ENCODE measurements at regions of chr1 and their contacts with region 1.

Region 1: GRCh38 chr1:109548321-109549267 is at the start of gene GNAI3:
- DNase-seq: peak; percentile 98
- ATAC-seq: peak; percentile 95
- H3K4me3 Mint-ChIP-seq: peak within 1 kb of the TSS; percentile 98
- H3K27ac Mint-ChIP-seq: peak within 1 kb of the TSS; percentile 96
- H3K4me1 Mint-ChIP-seq: peaks cover 40% of the 10 kb centered on the region
- H3K27me3 Mint-ChIP-seq: no peaks in the 10 kb centered on the region
- CTCF ChIP-seq: no peak
- total RNA-seq, gene GNAI3: 7.5 to 7.7 TPM

Region 2: GRCh38 chr1:109493805-109494539 is 54.6 kb before region 1 on chr1 and contains the start of gene CYB561D1:
- CTCF ChIA-PET with region 1: interaction called, 13 read pairs
- POLR2A ChIA-PET with region 1: interaction called, 3 read pairs
- intact Hi-C with region 1: no loop called
- DNase-seq: peak; percentile 89
- ATAC-seq: peak; percentile 91
- H3K4me3 Mint-ChIP-seq: peak within 1 kb of the TSS; percentile 93
- H3K27ac Mint-ChIP-seq: peak within 1 kb of the TSS; percentile 73
- H3K4me1 Mint-ChIP-seq: peaks cover 45% of the 10 kb centered on the region
- H3K27me3 Mint-ChIP-seq: no peaks in the 10 kb centered on the region
- CTCF ChIP-seq: peak; percentile 88
- total RNA-seq, gene CYB561D1: 7.0 to 9.5 TPM

Region 3: GRCh38 chr1:109564194-109564878 is 15.7 kb after region 1 on chr1:
- CTCF ChIA-PET with region 1: interaction called, 13 read pairs
- POLR2A ChIA-PET with region 1: interaction called, 14 read pairs
- intact Hi-C with region 1: no loop called
- DNase-seq: no peak
- ATAC-seq: no peak
- H3K4me3 Mint-ChIP-seq: no peak overlapping the region
- H3K27ac Mint-ChIP-seq: no peak overlapping the region
- H3K4me1 Mint-ChIP-seq: peaks cover 55% of the 10 kb centered on the region
- H3K27me3 Mint-ChIP-seq: no peaks in the 10 kb centered on the region
- CTCF ChIP-seq: no peak

Region 4: GRCh38 chr1:109613361-109614147 is 65.0 kb after region 1 on chr1:
- CTCF ChIA-PET with region 1: interaction called, 33 read pairs
- POLR2A ChIA-PET with region 1: interaction called, 26 read pairs
- intact Hi-C with region 1: no loop called
- DNase-seq: no peak
- ATAC-seq: no peak
- H3K4me3 Mint-ChIP-seq: no peak overlapping the region
- H3K27ac Mint-ChIP-seq: no peak overlapping the region
- H3K4me1 Mint-ChIP-seq: peaks cover 21% of the 10 kb centered on the region
- H3K27me3 Mint-ChIP-seq: no peaks in the 10 kb centered on the region
- CTCF ChIP-seq: no peak

Region 5: GRCh38 chr1:109630081-109630897 is 81.7 kb after region 1 on chr1:
- CTCF ChIA-PET with region 1: interaction called, 294 read pairs
- POLR2A ChIA-PET with region 1: interaction called, 10 read pairs
- intact Hi-C with region 1: no loop called
- DNase-seq: peak; percentile 57
- ATAC-seq: no peak
- H3K4me3 Mint-ChIP-seq: no peak overlapping the region
- H3K27ac Mint-ChIP-seq: no peak overlapping the region
- H3K4me1 Mint-ChIP-seq: peaks cover 10% of the 10 kb centered on the region
- H3K27me3 Mint-ChIP-seq: no peaks in the 10 kb centered on the region
- CTCF ChIP-seq: peak; percentile 53

Region 6: DNA sequence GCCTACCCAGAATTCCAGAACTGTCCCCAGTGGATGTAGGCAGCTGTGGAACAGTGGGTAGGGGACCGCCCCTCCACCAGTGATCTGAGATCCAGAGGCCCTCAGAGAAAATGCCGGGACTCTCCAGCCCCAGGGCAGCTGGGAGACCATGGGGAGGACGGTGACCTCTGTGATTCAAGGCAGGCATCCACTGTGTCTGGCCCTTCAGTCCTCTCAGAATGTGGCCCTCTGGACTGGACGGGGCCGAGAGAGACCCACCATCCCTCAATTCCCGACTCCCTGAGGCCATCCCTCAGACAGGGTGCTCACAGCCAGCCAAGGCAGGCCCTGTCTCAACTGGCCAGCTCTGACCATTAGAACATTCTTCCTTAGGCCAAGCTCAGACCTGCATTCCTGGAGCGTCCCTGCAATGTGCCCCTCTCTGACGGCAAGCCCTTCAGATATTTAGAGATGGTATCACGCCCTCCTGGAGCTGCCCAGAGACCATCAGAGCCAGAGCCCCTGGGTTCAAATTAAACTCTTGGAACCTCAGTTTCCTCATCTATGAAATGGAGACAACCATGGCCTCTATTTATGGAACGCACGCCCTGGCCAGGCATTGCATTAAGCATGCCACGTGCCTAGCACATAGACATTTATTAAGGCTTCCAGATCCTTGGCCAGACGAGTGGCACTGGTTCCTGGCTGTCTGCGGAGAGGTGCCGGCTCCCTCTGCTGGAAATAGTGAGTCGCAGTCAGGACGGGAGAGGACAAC is 224.7 kb after region 1 on chr1:
- CTCF ChIA-PET with region 1: interaction called, 43 read pairs
- POLR2A ChIA-PET with region 1: no interaction called
- intact Hi-C with region 1: loop called (anchors 2 kb)
- DNase-seq: peak; percentile 84
- ATAC-seq: peak; percentile 86
- H3K4me3 Mint-ChIP-seq: no peak overlapping the region
- H3K27ac Mint-ChIP-seq: no peak overlapping the region
- H3K4me1 Mint-ChIP-seq: no peaks in the 10 kb centered on the region
- H3K27me3 Mint-ChIP-seq: no peaks in the 10 kb centered on the region
- CTCF ChIP-seq: peak; percentile 80